IMR-90 (cell line): ENCODE measurements at regions of chr7 and their contacts with region 1.

Region 1: DNA sequence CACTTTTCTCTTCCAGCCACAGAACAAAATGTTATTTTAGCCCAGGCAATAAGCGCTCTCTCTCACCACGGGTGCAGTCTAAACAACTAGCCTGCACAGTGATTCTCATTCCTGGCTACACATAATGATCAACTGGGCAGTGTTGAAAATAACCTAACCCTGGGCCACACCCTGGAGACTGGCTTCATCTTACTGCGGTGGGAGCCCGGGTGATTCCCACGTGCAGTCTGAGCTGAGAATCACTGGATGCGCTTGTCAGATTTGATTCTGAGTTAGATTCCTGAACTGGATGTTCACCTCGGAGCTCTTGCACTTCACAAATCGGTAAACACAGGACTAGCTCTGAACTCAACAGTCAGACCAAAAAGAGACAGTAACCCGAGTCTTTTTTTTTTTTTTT is 14.9 kb downstream of the ZC3HAV1 start:
- DNase-seq: peak; percentile 7
- ATAC-seq: peak; percentile 42
- H3K4me3 ChIP-seq: no peak overlapping the region
- H3K27ac ChIP-seq: no peak overlapping the region
- H3K4me1 ChIP-seq: peaks cover 2% of the 10 kb centered on the region; the same call in 1 of the 2 replicates
- H3K27me3 ChIP-seq: no peaks in the 10 kb centered on the region
- CTCF ChIP-seq: no peak
- POLR2A ChIP-seq: no peak
- RAD21 ChIP-seq: no peak

Region 2: GRCh38 chr7:138970952-138971351 is 123.6 kb before region 1 on chr7:
- CTCF ChIA-PET with region 1: no interaction called
- POLR2A ChIA-PET with region 1: no interaction called
- dilution Hi-C with region 1: no loop called
- in situ Hi-C with region 1: no loop called
- intact Hi-C with region 1: no loop called
- DNase-seq: no peak
- ATAC-seq: no peak
- H3K4me3 ChIP-seq: no peak overlapping the region
- H3K27ac ChIP-seq: no peak overlapping the region
- H3K4me1 ChIP-seq: no peaks in the 10 kb centered on the region
- H3K27me3 ChIP-seq: no peaks in the 10 kb centered on the region
- CTCF ChIP-seq: no peak
- POLR2A ChIP-seq: no peak
- RAD21 ChIP-seq: no peak

Region 3: DNA sequence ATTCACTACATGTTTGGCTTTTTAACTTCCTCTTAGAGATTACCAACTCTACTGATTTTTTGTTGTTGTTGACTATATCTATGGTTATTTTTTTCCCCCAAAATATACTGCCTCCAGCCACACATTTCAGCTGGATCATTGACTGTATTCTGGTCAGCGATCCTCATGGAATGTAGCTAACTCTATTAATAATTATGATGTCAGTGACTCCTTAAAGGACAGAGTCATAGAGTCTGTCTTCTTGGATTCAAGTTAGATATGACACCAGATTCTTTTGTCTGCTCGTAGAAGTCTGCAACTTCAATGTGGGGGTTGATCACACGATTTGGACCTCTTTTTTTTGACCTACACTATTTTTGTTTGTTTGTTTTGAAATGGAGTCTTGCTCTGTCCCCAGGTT is 169.6 kb after region 1 on chr7:
- CTCF ChIA-PET with region 1: no interaction called
- POLR2A ChIA-PET with region 1: interaction called, 15 read pairs
- dilution Hi-C with region 1: no loop called
- in situ Hi-C with region 1: no loop called
- intact Hi-C with region 1: no loop called
- DNase-seq: no peak
- ATAC-seq: no peak
- H3K4me3 ChIP-seq: no peak overlapping the region
- H3K27ac ChIP-seq: no peak overlapping the region
- H3K4me1 ChIP-seq: no peaks in the 10 kb centered on the region
- H3K27me3 ChIP-seq: no peaks in the 10 kb centered on the region
- CTCF ChIP-seq: no peak
- POLR2A ChIP-seq: no peak
- RAD21 ChIP-seq: no peak